Vagina (tissue), 2 donors: ENCODE measurements at regions of chr2 and their contacts with region 1.

Region 1: GRCh38 chr2:15939854-15940660 is at the start of gene MYCN:
- DNase-seq: no peak
- H3K4me3 ChIP-seq: peak within 1 kb of the TSS; percentile 48 to 61
- H3K27ac ChIP-seq: no peak within 1 kb of the TSS
- H3K4me1 ChIP-seq: peaks cover 47% of the 10 kb centered on the region
- H3K27me3 ChIP-seq: no peaks in the 10 kb centered on the region
- CTCF ChIP-seq: peak in 2 of 3 experiments; percentile 39 to 81
- POLR2A ChIP-seq: no peak
- total RNA-seq, gene MYCN: 2.0 TPM

Region 2: GRCh38 chr2:16608661-16609643 is 668.9 kb after region 1 on chr2:
- intact Hi-C with region 1: loop called (anchors 5 kb)
- DNase-seq: no peak
- H3K4me3 ChIP-seq: peak overlapping the region; percentile 21 to 38
- H3K27ac ChIP-seq: peak overlapping the region; percentile 12
- H3K4me1 ChIP-seq: peaks cover 31% of the 10 kb centered on the region
- H3K27me3 ChIP-seq: no peaks in the 10 kb centered on the region
- CTCF ChIP-seq: peak; percentile 77 to 96 (median 91)
- POLR2A ChIP-seq: no peak